ENCODE measurements at regions of chr12 and their contacts with region 1.

Region 1: DNA sequence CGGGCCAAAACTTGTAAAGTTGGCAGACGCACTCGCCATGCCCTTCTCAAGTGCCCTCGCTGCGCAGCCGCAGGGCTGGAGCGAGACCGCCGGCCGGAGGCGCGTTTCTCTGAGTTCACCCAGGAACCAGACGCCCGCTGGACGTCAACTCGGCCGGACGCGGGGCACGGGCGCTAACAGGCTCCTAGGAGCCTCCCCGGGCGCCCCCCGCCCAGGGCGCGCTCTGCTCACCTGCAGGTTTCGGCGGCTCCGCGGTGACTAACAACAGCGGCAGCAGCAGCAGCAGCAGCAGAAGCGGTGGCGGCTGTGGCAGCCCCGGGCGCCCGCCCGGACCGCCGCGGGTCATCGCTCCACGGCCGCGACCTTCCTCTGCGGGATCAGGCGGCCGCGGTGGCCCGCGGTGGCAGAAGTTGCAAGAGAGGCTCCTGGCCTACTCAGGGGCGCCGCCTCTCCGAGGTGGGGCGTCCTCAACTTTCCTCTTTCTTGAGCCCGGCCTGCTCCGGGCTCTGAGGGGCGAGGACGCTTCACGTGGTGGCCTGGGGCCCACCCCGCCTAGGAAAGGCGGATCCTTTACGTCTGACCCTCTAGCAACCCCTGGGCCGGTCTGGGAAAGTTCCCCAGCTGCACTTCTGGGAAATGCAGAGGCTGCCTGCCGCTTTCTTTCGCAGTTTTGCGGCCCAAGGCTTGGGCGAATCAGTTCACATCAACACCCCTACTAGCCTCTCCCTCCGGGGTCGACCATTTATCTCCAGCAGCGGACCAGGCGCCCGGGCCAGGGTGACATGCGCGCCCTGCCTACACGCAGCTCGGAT is at the start of gene PLBD1:
- H3K4me3 Mint-ChIP-seq: peak within 1 kb of the TSS; percentile 77
- H3K27ac Mint-ChIP-seq: peak within 1 kb of the TSS; percentile 87
- H3K4me1 Mint-ChIP-seq: peaks cover 41% of the 10 kb centered on the region
- H3K27me3 Mint-ChIP-seq: no peaks in the 10 kb centered on the region

Region 2: GRCh38 chr12:14521822-14522221 is 45.7 kb before region 1 on chr12:
- intact Hi-C with region 1: no loop called
- H3K4me3 Mint-ChIP-seq: no peak overlapping the region
- H3K27ac Mint-ChIP-seq: no peak overlapping the region
- H3K4me1 Mint-ChIP-seq: peaks cover 22% of the 10 kb centered on the region
- H3K27me3 Mint-ChIP-seq: no peaks in the 10 kb centered on the region

Region 3: DNA sequence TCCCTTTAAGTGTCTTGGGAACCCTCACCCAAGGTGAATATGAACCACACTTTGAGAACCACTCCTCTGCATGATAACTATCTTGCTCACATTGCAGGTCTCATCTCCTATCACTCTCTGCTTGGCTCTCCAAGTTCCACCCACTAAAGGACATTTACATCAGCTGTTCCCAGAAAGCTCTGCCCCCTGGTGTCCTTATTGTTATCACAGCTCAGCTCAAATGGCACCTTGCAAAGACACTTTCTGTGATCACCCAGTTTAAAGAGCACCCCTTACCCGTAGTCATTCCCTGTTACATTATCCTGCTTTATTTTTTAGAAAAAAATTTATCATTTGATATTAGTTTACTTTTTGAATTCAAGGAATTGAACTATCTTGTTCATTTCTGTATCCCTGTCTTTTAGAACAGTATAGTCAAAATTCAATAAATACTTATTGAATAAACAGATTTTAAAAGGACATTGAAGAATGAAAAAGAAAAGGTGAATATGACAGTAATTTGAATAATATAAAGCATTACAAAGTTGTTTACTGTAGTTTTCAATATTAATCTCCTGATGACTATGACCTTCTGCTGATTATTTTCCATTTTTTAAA is 149.4 kb after region 1 on chr12:
- intact Hi-C with region 1: loop called (anchors 5 kb)
- H3K4me3 Mint-ChIP-seq: no peak overlapping the region
- H3K27ac Mint-ChIP-seq: no peak overlapping the region
- H3K4me1 Mint-ChIP-seq: no peaks in the 10 kb centered on the region
- H3K27me3 Mint-ChIP-seq: peaks cover 8% of the 10 kb centered on the region